ENCODE measurements at regions of chr11 and their contacts with region 1.

Region 1: DNA sequence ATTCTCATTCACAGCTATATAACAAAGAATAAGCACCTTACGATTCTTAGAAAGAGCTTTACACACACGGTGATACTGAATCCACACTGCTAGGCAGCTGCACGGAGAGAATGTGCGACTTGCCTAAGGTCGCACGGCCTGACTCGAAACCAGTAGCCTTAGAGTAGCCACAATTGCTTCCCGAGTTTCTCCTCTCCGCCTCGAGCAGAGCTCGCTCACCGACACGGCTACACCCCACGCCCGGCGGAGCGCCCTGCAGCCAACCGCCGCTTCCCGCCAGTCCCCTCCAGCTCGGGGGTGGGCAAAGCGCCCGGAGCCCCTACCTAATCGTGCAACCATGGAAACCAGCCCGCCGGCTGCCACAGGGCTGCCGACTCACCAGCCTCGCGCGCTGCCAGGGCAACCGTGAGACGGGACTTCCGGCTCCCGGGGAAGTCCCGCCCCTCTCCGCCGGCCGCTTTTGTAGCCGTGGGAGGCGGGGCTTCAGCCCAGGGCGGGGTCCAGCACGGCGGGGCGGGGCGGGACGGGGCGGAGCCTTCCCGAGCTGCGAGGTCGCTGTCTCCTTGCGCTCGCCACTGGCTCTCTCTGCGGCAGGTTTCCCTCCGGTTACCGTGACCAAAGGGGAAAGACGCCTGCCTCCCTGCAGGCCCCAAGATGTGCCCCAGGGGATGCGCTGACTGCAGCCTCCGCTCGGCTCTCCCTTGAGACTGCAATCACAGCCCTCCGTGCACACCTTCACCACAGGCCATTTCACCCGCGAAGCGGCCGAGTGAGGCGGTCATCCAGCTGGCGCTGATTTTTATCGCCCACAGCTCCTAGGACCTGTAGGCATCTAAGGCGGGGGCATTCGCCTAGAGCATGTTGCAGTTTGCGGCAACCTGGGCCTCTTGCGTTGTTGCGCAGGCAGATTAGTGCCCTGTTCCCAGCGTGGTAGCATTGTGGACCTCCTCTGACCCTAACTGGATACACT is 1.1 kb downstream of the BSCL2 start:
- DNase-seq: peak; percentile 93 to 96
- ATAC-seq: peak; percentile 85 to 90 (median 88)
- H3K4me3 ChIP-seq: peak overlapping the region; percentile 42 to 90 (median 72)
- H3K27ac ChIP-seq: peak overlapping the region; percentile 63 to 91 (median 81)
- H3K4me1 ChIP-seq: peaks cover 23 to 61% (median 40%) of the 10 kb centered on the region in 9 donors
- H3K27me3 ChIP-seq: no peaks in the 10 kb centered on the region
- CTCF ChIP-seq: no peak

Region 2: GRCh38 chr11:62665075-62665598 is 41.0 kb before region 1 on chr11 and contains the starts of genes C11orf98 and CSKMT:
- intact Hi-C with region 1: loop called in 3 of 10 experiments (anchors 5 kb)
- DNase-seq: peak; percentile 94 to 95
- ATAC-seq: peak; percentile 96 to 99 (median 98)
- H3K4me3 ChIP-seq: peak within 1 kb of the TSS; percentile 59 to 95 (median 80)
- H3K27ac ChIP-seq: peak within 1 kb of the TSS; percentile 80 to 94 (median 91)
- H3K4me1 ChIP-seq: peaks cover 16 to 49% (median 37%) of the 10 kb centered on the region in 9 donors
- H3K27me3 ChIP-seq: no peaks in the 10 kb centered on the region
- CTCF ChIP-seq: no peak
- total RNA-seq, gene C11orf98: 25.8 to 41.5 (median 30.0) TPM
- total RNA-seq, gene CSKMT: 2.4 to 7.7 (median 4.2) TPM

Region 3: DNA sequence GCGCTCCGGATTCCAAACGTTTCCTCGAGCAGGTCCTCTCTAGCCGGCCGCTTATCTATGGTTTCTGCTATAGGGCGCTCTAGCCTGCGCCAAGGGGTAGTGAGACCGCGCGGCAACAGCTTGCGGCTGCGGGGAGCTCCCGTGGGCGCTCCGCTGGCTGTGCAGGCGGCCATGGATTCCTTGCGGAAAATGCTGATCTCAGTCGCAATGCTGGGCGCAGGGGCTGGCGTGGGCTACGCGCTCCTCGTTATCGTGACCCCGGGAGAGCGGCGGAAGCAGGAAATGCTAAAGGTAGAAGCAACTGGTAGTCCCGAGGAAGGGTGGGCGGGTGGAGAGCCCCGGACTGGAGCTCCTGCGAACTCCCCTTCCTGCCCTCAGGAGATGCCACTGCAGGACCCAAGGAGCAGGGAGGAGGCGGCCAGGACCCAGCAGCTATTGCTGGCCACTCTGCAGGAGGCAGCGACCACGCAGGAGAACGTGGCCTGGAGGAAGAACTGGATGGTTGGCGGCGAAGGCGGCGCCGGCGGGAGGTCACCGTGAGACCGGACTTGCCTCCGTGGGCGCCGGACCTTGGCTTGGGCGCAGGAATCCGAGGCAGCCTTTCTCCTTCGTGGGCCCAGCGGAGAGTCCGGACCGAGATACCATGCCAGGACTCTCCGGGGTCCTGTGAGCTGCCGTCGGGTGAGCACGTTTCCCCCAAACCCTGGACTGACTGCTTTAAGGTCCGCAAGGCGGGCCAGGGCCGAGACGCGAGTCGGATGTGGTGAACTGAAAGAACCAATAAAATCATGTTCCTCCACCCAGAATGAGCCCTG is 34.4 kb before region 1 on chr11 and contains the starts of genes LBHD1 and UQCC3:
- intact Hi-C with region 1: loop called in 3 of 10 experiments (anchors 5 kb)
- DNase-seq: peak; percentile 67 to 84
- ATAC-seq: peak; percentile 82 to 92 (median 88)
- H3K4me3 ChIP-seq: peak within 1 kb of the TSS; percentile 61 to 94 (median 83)
- H3K27ac ChIP-seq: peak within 1 kb of the TSS; percentile 83 to 95 (median 90)
- H3K4me1 ChIP-seq: peaks cover 11 to 67% (median 44%) of the 10 kb centered on the region in 9 donors
- H3K27me3 ChIP-seq: no peaks in the 10 kb centered on the region
- CTCF ChIP-seq: peak in 1 of 9 donors; percentile 7
- total RNA-seq, gene LBHD1: 1.6 to 4.9 (median 3.0) TPM
- total RNA-seq, gene UQCC3: 3.9 to 9.5 (median 5.5) TPM